Activated CD4-positive, alpha-beta T cell treated with anti-CD3 and anti-CD28 coated beads for 36 hours (primary cell): ENCODE measurements at regions of chr18 and their contacts with region 1.

Region 1: GRCh38 chr18:10490401-10491165 is 35.2 kb upstream of the NAPG start:
- DNase-seq: peak; percentile 89
- ATAC-seq: peak; percentile 100
- H3K4me3 Mint-ChIP-seq: no peak overlapping the region
- H3K27ac Mint-ChIP-seq: no peak overlapping the region
- H3K4me1 Mint-ChIP-seq: peaks cover 9% of the 10 kb centered on the region
- H3K27me3 Mint-ChIP-seq: no peaks in the 10 kb centered on the region

Region 2: GRCh38 chr18:10476338-10476791 is 14.2 kb before region 1 on chr18:
- CTCF ChIA-PET with region 1: interaction called, 13 read pairs
- POLR2A ChIA-PET with region 1: no interaction called
- intact Hi-C with region 1: no loop called
- DNase-seq: no peak
- ATAC-seq: no peak
- H3K4me3 Mint-ChIP-seq: no peak overlapping the region
- H3K27ac Mint-ChIP-seq: no peak overlapping the region
- H3K4me1 Mint-ChIP-seq: no peaks in the 10 kb centered on the region
- H3K27me3 Mint-ChIP-seq: peaks cover 10% of the 10 kb centered on the region

Region 3: DNA sequence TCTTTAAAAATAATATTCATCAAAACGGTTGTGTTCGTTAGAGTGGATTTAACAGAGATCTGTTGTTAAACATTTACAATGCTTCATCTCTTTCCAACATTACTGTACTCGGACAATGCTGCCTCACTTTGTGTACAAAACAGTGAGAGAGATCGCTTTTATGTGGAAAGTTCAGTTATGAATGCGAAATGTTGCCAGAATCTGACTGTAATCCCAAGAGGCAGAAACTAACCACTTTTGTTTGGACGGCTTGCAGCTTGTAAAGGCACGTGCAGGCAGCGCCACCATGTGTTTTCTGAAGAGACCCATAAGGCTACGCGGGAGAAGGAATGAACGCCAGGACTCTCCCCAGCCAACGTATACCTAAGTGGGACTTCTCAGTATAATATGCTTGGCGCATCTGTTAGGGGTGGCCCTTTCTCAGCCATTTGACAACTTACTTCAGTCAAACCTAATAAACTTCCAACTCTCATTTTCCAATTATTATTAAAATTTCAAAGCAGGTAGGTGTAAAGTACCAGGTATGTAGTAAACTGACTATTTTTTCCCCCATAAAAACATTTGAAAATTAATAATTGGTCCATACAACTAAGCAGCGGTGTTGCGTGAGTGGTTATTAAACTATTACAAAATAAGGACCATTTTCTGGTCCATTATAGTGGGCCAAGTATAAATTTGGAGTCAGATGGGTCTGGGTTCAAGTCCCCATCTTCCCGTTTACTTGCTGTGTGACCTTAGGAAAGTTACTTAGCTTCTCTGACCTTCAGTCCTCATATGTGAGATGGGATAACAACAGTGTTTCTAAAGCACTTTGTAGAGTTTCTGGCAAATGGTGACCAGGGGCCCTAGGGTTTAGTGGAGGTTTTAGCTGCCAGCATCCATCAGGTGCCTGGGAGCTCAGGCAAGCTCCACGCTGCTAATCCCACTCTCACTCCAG is 29.7 kb after region 1 on chr18:
- CTCF ChIA-PET with region 1: interaction called, 27 read pairs
- POLR2A ChIA-PET with region 1: no interaction called
- intact Hi-C with region 1: loop called (anchors 2 to 5 kb)
- DNase-seq: peak; percentile 83
- ATAC-seq: peak; percentile 92
- H3K4me3 Mint-ChIP-seq: no peak overlapping the region
- H3K27ac Mint-ChIP-seq: no peak overlapping the region
- H3K4me1 Mint-ChIP-seq: peaks cover 16% of the 10 kb centered on the region
- H3K27me3 Mint-ChIP-seq: peaks cover 25% of the 10 kb centered on the region

Region 4: GRCh38 chr18:10525371-10526210 is 35.0 kb after region 1 on chr18 and contains the start of gene NAPG:
- CTCF ChIA-PET with region 1: interaction called, 27 read pairs
- POLR2A ChIA-PET with region 1: no interaction called
- intact Hi-C with region 1: loop called (anchors 2 to 5 kb)
- DNase-seq: peak; percentile 94
- ATAC-seq: peak; percentile 84
- H3K4me3 Mint-ChIP-seq: peak within 1 kb of the TSS; percentile 92
- H3K27ac Mint-ChIP-seq: peak within 1 kb of the TSS; percentile 96
- H3K4me1 Mint-ChIP-seq: peaks cover 49% of the 10 kb centered on the region
- H3K27me3 Mint-ChIP-seq: peaks cover 4% of the 10 kb centered on the region
- total RNA-seq, gene NAPG: 28.6 to 31.0 TPM